ENCODE measurements at regions of chr3 and their contacts with region 1.

Region 1: DNA sequence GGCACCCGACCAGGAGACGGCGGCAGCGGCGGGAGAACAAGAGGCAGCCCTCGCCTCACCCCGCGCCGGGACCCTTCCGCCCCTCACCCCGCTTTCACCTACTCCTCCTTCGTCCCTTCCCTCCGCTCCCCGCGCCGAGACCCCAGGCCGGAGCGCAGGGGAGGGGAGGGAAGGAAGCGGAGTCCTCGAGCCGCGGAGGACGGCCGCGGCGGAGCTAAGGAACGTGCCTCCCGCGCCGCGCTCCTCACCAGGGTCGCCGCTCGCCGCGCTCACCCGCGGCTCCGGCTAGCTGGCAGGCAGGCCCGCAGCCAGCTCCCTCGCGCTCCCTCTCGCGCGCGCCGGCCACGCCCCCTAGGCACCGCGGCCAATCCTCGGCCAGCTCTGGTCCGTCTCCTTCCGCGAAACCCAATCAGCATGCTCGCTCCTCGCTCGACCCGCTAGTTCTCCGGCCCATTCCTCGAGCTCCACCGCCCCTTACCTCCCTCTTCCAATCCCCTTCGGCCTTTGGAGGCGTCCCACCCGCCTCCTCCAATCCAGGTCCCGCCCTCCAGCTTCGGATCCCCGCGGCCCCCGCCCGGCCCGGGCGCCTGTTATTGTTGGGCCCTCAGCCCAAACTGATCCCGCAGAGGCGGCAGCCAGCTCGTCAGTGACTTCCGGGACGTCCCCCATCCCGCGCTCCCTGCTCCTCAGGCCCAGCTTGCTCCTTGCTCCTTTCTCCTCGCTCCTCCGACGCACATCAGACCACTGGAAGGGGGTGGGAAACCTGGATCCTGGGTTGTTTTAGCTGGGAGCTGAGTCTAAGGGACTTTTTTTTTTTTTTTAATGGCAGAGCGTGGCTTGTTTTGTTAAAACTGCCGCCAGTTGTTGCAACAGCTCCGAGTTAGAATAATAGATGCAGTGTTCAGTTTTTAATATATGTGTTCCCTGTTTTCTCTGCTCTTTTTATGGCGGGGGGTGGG is at the start of gene DCBLD2:
- DNase-seq: peak; percentile 99
- H3K4me3 ChIP-seq: peak within 1 kb of the TSS; percentile 77 to 93 (median 92)
- H3K27ac ChIP-seq: peak within 1 kb of the TSS; percentile 88
- H3K4me1 ChIP-seq: peaks cover 41% of the 10 kb centered on the region
- H3K27me3 ChIP-seq: no peaks in the 10 kb centered on the region
- CTCF ChIP-seq: no peak
- POLR2A ChIP-seq: peak; percentile 97
- total RNA-seq, gene DCBLD2: 62.6 and 77.3 TPM in 2 replicates

Region 2: GRCh38 chr3:98817547-98818041 is 84.1 kb before region 1 on chr3:
- CTCF ChIA-PET with region 1: interaction called, 13 read pairs
- POLR2A ChIA-PET with region 1: no interaction called
- dilution Hi-C with region 1: no loop called
- intact Hi-C with region 1: loop called (anchors 1 kb)
- DNase-seq: peak; percentile 66
- H3K4me3 ChIP-seq: no peak overlapping the region
- H3K27ac ChIP-seq: peak overlapping the region; percentile 34
- H3K4me1 ChIP-seq: peaks cover 8% of the 10 kb centered on the region
- H3K27me3 ChIP-seq: no peaks in the 10 kb centered on the region
- CTCF ChIP-seq: peak; percentile 27 to 34
- POLR2A ChIP-seq: no peak

Region 3: DNA sequence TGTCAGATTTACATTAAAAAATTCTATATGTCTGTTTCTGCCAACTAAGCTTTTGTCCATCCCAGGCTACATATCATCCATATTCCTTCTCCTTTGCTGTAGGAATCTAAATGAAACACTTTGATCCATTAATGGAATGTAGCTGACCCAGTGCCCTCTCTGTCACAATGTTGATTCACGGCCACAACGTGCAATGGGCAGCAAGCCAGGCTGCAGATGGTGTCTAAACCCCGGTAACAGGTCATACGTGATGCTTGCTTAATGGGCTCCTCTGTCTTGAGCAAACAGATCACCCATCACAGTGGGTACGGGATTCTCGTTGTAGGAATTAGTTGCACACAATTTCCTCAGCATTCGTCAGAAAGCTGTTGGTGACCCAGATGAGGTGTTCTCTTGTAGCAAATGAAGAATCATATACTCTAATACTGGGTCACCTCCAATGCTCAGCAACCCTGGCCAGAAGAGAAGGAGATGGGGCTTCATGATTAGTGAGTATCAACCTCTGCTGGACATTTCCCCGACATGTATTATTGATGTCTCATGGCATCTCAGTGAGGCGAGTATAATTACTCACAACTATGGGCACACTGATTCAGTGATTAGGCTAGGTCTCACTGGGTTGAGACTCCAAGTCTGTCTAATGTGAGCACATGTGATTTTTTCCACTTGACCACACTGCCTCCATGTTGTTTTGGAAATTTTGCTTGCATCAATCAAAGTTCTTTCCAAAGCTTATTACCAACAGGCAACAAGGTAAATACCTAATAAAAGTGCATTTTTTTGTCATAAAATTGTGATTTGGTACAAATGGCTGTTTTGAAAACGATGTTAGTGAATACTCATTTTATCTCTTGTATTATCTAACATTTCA is 12.8 kb after region 1 on chr3:
- CTCF ChIA-PET with region 1: interaction called, 11 read pairs
- POLR2A ChIA-PET with region 1: no interaction called
- dilution Hi-C with region 1: no loop called
- intact Hi-C with region 1: no loop called
- DNase-seq: no peak
- H3K4me3 ChIP-seq: no peak overlapping the region
- H3K27ac ChIP-seq: no peak overlapping the region
- H3K4me1 ChIP-seq: no peaks in the 10 kb centered on the region
- H3K27me3 ChIP-seq: no peaks in the 10 kb centered on the region
- CTCF ChIP-seq: no peak
- POLR2A ChIP-seq: no peak

Region 4: GRCh38 chr3:98972155-98972554 is 70.5 kb after region 1 on chr3:
- CTCF ChIA-PET with region 1: interaction called, 3 read pairs
- POLR2A ChIA-PET with region 1: interaction called, 8 read pairs
- dilution Hi-C with region 1: no loop called
- intact Hi-C with region 1: loop called (anchors 1 kb)
- DNase-seq: peak; percentile 95
- H3K4me3 ChIP-seq: no peak overlapping the region
- H3K27ac ChIP-seq: peak overlapping the region; percentile 100
- H3K4me1 ChIP-seq: peaks cover 63% of the 10 kb centered on the region
- H3K27me3 ChIP-seq: no peaks in the 10 kb centered on the region
- CTCF ChIP-seq: no peak
- POLR2A ChIP-seq: no peak

Measured in endothelial cell of umbilical vein (primary cell).